Dendritic cell treated with granulocyte-macrophage colony-stimulating factor and Interleukin-4, amounts not matched to agents 40 ng/mL and 50 ng/mL, for 4 days (primary cell): ENCODE measurements at regions of chr15 and their contacts with region 1.

Region 1: GRCh38 chr15:45790325-45790943 is 155.6 kb downstream of the SQOR start:
- H3K4me3 Mint-ChIP-seq: no peak overlapping the region
- H3K27ac Mint-ChIP-seq: no peak overlapping the region
- H3K4me1 Mint-ChIP-seq: no peaks in the 10 kb centered on the region
- H3K27me3 Mint-ChIP-seq: peaks cover 2% of the 10 kb centered on the region

Region 2: GRCh38 chr15:45705510-45706473 is 84.6 kb before region 1 on chr15:
- intact Hi-C with region 1: loop called (anchors 2 kb)
- H3K4me3 Mint-ChIP-seq: peak overlapping the region; percentile 74
- H3K27ac Mint-ChIP-seq: no peak overlapping the region
- H3K4me1 Mint-ChIP-seq: peaks cover 25% of the 10 kb centered on the region
- H3K27me3 Mint-ChIP-seq: peaks cover 33% of the 10 kb centered on the region

Region 3: GRCh38 chr15:45714590-45715488 is 75.6 kb before region 1 on chr15:
- intact Hi-C with region 1: loop called (anchors 2 kb)
- H3K4me3 Mint-ChIP-seq: no peak overlapping the region
- H3K27ac Mint-ChIP-seq: no peak overlapping the region
- H3K4me1 Mint-ChIP-seq: no peaks in the 10 kb centered on the region
- H3K27me3 Mint-ChIP-seq: peaks cover 13% of the 10 kb centered on the region

Region 4: DNA sequence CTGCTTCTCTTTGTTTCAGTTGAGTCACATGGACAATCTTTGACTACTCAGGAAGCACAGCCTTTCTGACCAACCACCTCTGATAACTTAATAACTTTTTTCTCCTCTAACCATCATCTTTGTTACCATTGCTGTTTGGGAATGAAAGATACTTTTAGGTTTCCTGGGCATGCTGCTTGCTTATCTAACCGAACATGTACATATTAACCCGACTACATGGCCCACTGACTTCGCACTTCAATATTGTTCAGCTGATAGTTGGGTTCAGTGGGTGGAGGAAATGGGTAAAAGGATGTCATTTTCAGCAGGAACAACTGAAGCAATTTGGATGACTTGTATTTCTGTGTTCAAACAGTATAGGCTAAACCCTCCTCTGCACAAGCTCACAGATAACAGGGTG is 58.7 kb after region 1 on chr15:
- intact Hi-C with region 1: no loop called
- H3K4me3 Mint-ChIP-seq: no peak overlapping the region
- H3K27ac Mint-ChIP-seq: no peak overlapping the region
- H3K4me1 Mint-ChIP-seq: no peaks in the 10 kb centered on the region
- H3K27me3 Mint-ChIP-seq: no peaks in the 10 kb centered on the region